Mammary epithelial cell (primary cell): ENCODE measurements at regions of chr7 and their contacts with region 1.

Region 1: GRCh38 chr7:117715784-117716445 is 157.3 kb downstream of the CTTNBP2 start:
- DNase-seq: peak; percentile 37
- H3K4me3 ChIP-seq: no peak overlapping the region
- H3K27ac ChIP-seq: no peak overlapping the region
- H3K4me1 ChIP-seq: no peaks in the 10 kb centered on the region
- H3K27me3 ChIP-seq: no peaks in the 10 kb centered on the region
- CTCF ChIP-seq: peak; percentile 45 to 75

Region 2: DNA sequence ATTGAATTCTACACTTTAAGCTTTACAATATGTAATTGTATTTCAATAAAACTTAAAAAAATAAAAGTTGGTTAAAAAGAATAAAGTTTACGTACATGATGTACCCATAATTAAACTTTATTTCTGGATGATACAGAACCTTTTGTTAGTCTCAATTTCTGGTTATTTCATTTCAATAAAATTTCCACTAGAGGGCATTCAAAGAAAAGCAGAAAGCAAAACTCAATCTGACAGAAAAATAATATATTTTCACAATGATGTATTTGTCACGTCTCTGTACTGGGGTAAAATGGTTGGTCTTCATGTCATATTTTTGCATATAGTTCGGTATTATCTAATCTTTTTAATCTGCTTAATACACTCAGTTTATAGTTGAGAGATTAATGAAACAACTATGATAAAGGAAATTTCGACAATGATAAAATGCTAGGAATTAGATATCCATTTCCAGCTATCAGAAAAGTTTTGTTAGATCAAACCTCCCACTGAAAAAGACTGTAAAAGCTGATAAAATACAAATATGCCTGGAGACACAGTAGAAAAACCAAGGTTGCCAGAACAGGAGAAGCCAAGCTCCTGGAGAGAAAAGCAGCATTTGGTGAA is 316.0 kb before region 1 on chr7:
- CTCF ChIA-PET with region 1: no interaction called
- dilution Hi-C with region 1: no loop called
- in situ Hi-C with region 1: no loop called
- intact Hi-C with region 1: loop called (anchors 1 kb)
- DNase-seq: no peak
- H3K4me3 ChIP-seq: no peak overlapping the region
- H3K27ac ChIP-seq: no peak overlapping the region
- H3K4me1 ChIP-seq: no peaks in the 10 kb centered on the region
- H3K27me3 ChIP-seq: peaks cover 2% of the 10 kb centered on the region
- CTCF ChIP-seq: peak; percentile 43 to 61

Region 3: DNA sequence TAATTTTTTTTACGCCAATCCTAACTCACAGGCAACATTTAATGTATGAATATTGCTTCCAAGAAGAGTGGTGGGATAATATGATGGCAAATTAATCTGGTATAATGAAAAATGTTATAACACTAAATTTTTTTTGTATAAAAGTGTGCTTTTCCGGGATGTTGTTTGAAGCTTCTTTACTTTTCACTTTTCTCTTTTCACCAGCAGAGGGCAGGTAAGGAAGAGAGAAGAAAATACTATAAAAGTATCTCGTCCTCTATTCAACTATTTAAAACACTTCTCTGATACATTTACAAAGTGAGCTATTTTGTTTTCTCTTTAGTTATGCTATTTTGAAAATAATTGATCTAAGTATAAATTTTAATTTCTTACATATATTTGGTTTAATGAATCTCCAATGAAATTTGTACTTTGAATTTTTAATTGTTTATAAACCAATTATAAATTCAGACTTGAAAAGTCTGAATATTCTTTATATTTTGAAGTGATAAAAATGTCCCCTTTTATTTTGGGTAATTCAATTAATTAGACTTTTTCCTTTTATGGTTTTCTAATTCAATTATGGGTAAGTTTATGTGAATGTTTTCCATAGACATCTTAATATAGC is 256.8 kb before region 1 on chr7:
- CTCF ChIA-PET with region 1: interaction called, 4 read pairs
- dilution Hi-C with region 1: no loop called
- in situ Hi-C with region 1: loop called (anchors 10 to 25 kb)
- intact Hi-C with region 1: loop called (anchors 1 kb)
- DNase-seq: no peak
- H3K4me3 ChIP-seq: no peak overlapping the region
- H3K27ac ChIP-seq: no peak overlapping the region
- H3K4me1 ChIP-seq: no peaks in the 10 kb centered on the region
- H3K27me3 ChIP-seq: no peaks in the 10 kb centered on the region
- CTCF ChIP-seq: peak; percentile 55 to 62